SK-N-SH (cell line): ENCODE measurements at regions of chr1 and their contacts with region 1.

Region 1: DNA sequence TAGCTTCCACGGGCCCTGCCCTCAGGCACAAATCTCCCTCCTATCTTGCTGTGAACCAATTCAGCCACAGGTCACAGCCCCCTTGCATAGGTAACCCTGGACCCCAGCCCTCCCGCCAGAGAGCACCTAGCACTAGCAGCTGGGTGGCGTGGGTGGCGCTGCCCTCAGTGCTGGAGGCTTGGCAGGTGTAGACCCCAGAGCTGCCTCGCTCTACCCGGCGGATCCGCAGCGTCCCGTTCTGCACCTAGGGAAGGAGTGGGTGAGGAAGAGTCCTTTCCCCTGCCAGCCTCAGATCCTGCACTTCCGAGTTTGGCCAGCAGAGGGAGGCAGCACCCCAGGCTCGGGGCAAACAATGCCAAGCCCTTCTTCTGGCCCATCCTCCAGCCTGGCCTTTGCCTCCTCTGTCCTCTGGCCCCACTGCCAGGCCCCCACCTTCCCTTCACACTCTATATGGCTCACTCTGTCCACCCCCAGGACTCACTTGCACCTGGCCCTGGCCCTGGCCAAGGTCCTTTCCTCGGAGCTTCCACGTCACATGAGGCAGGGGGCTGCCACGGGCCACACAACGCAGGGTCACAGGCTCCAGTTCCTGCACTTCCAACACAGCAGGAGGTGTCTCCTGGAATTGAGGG is 9.0 kb downstream of the IGSF9 start:
- DNase-seq: peak; percentile 90
- H3K4me3 ChIP-seq: no peak overlapping the region; a peak in 1 of 4 replicates
- H3K27ac ChIP-seq: no peak overlapping the region
- H3K4me1 ChIP-seq: peaks cover 0 to 2% of the 10 kb centered on the region in 2 experiments; a peak in 1 of 4 replicates
- H3K27me3 ChIP-seq: no peaks in the 10 kb centered on the region
- CTCF ChIP-seq: peak; percentile 88
- EP300 ChIP-seq: no peak
- RAD21 ChIP-seq: peak; percentile 84

Region 2: GRCh38 chr1:159924981-159925712 is 11.2 kb before region 1 on chr1 and contains the start of gene TAGLN2:
- CTCF ChIA-PET with region 1: interaction called, 23 read pairs
- POLR2A ChIA-PET with region 1: interaction called, 3 read pairs
- DNase-seq: peak; percentile 93
- H3K4me3 ChIP-seq: peak within 1 kb of the TSS; percentile 91 to 97
- H3K27ac ChIP-seq: peak within 1 kb of the TSS; percentile 73 to 97; a peak in 3 of 4 replicates
- H3K4me1 ChIP-seq: peaks cover 18 to 35% of the 10 kb centered on the region in 2 experiments; a peak in 2 of 4 replicates
- H3K27me3 ChIP-seq: no peaks in the 10 kb centered on the region
- CTCF ChIP-seq: no peak
- EP300 ChIP-seq: no peak
- RAD21 ChIP-seq: no peak
- polyA plus RNA-seq, gene TAGLN2: 625 and 646 TPM in 2 replicates

Region 3: GRCh38 chr1:159953536-159954515 is 17.4 kb after region 1 on chr1 and contains the start of gene SLAMF9:
- CTCF ChIA-PET with region 1: interaction called, 18 read pairs
- POLR2A ChIA-PET with region 1: no interaction called
- DNase-seq: no peak
- H3K4me3 ChIP-seq: no peak within 1 kb of the TSS
- H3K27ac ChIP-seq: no peak within 1 kb of the TSS
- H3K4me1 ChIP-seq: no peaks in the 10 kb centered on the region
- H3K27me3 ChIP-seq: no peaks in the 10 kb centered on the region; the same call in 1 of the 2 replicates
- CTCF ChIP-seq: no peak
- EP300 ChIP-seq: no peak
- RAD21 ChIP-seq: no peak
- polyA plus RNA-seq, gene SLAMF9: 0.12 and 0.19 TPM in 2 replicates